Activated CD4-positive, alpha-beta T cell treated with anti-CD3 and anti-CD28 coated beads, Interleukin-2, amount 10 ng/mL, durations not matched to agents 7 days and 5 days (primary cell): ENCODE measurements at regions of chr12 and their contacts with region 1.

Region 1: DNA sequence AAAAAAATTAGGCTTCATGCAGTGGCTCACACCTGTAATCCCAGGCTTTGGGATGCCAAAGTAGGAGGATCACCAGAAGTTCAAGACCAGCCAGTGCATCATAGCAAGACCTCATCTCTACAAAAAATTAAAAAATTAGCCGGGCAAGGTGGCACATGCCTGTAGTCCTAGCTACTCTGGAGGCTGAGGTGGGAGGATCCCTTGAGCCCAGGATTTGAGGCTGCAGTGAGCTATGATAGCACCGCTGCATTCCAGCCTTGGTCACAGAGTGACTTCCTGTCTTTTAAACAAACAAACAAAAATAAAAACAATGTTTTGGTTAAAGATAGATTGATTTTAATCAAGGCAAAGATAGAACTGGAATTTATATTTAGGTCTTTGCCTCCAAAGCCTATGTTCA is 60.6 kb downstream of the WNK1 start:
- DNase-seq: no peak
- H3K4me3 Mint-ChIP-seq: no peak overlapping the region
- H3K27ac Mint-ChIP-seq: no peak overlapping the region
- H3K4me1 Mint-ChIP-seq: peaks cover 58% of the 10 kb centered on the region
- H3K27me3 Mint-ChIP-seq: no peaks in the 10 kb centered on the region

Region 2: DNA sequence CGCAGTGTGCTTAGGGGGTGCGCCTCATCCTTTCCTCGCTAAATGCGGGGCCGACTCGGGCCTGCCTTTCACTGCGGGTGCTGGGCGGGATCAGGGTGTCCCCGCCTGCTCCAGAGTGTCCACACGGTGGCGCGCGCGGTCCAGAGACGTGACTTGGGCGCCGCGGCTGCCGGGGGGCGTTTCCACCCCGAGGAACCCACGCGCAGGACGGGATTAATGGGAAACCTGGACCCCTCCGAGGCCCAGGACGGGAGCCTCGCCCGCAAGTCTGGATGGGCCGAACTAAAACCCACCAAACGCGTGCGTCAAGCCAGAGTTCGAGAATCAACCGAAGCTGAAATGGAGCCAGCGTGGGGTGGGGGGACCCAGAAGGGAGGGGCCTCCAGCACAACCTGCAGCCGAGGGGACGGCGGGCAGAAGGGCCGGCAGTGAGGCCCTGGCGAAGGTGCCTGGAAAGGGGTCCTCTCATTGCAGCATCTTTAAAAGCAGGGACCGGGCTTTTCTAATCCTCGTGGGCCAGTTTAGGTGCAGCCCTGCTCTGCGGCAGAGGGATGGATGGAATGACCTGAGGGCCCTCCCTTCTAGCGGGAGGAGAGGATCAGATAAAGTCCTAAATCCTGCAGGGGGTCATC is 243.0 kb before region 1 on chr12:
- CTCF ChIA-PET with region 1: interaction called, 20 read pairs
- POLR2A ChIA-PET with region 1: no interaction called
- DNase-seq: peak; percentile 88
- H3K4me3 Mint-ChIP-seq: peak overlapping the region; percentile 73
- H3K27ac Mint-ChIP-seq: peak overlapping the region; percentile 68
- H3K4me1 Mint-ChIP-seq: peaks cover 77% of the 10 kb centered on the region
- H3K27me3 Mint-ChIP-seq: no peaks in the 10 kb centered on the region

Region 3: GRCh38 chr12:848173-848865 is 35.4 kb after region 1 on chr12:
- CTCF ChIA-PET with region 1: no interaction called
- POLR2A ChIA-PET with region 1: no interaction called
- DNase-seq: no peak
- H3K4me3 Mint-ChIP-seq: no peak overlapping the region
- H3K27ac Mint-ChIP-seq: peak overlapping the region; percentile 6
- H3K4me1 Mint-ChIP-seq: peaks cover 22% of the 10 kb centered on the region
- H3K27me3 Mint-ChIP-seq: no peaks in the 10 kb centered on the region